ENCODE measurements at regions of chr16 and their contacts with region 1.

Region 1: GRCh38 chr16:3045357-3045728 is 1.0 kb upstream of the MMP25 start:
- DNase-seq: peak; percentile 41
- H3K4me3 Mint-ChIP-seq: peak overlapping the region; percentile 81
- H3K27ac Mint-ChIP-seq: peak overlapping the region; percentile 21
- H3K4me1 Mint-ChIP-seq: peaks cover 27% of the 10 kb centered on the region
- H3K27me3 Mint-ChIP-seq: peaks cover 26% of the 10 kb centered on the region

Region 2: GRCh38 chr16:2897113-2897512 is 148.2 kb before region 1 on chr16:
- intact Hi-C with region 1: no loop called
- DNase-seq: no peak
- H3K4me3 Mint-ChIP-seq: no peak overlapping the region
- H3K27ac Mint-ChIP-seq: no peak overlapping the region
- H3K4me1 Mint-ChIP-seq: no peaks in the 10 kb centered on the region
- H3K27me3 Mint-ChIP-seq: no peaks in the 10 kb centered on the region

Region 3: DNA sequence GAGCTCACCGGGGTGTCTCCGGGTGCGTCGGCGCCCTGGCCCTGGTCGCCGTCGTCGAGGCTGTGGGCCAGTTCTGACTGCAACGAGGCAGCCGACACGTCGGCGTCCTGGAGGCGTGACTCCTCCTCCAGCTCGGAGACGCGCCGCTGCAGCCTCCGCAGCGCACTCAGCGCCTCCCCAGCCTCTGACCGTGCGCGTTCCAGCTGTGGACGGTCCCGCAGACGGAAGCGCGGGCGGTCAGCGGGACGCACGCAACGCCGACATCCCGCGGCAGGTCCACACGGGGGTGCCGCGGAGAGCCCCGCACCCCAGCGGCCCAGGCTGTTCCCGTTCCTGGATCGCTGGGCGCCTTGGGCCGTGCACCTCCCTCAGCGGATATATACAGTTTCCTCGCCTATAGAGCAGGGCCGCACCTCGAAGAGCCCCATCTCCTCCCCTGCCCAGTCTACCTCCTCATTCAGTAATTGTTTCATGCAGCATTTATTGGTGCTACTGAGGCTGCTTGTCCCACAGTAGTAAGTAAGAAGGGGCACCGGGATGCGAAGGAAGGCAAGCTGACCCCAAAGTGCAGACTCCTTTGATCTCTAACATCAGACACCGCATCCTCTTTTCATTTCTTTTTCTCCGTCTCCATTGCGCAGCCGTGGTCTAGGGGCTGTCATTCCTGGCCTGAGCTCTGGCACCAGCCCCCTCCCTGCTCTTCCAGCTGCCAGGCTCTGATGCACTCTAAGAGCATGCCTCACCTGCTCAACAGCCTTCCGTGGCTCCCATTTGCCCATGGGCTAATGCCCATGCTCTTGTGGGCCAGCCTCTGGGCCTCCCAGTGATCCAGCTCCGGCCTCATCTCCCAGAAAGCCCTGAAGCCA is 15.6 kb before region 1 on chr16:
- intact Hi-C with region 1: loop called (anchors 2 kb)
- DNase-seq: peak; percentile 52
- H3K4me3 Mint-ChIP-seq: peak overlapping the region; percentile 66
- H3K27ac Mint-ChIP-seq: peak overlapping the region; percentile 49
- H3K4me1 Mint-ChIP-seq: peaks cover 23% of the 10 kb centered on the region
- H3K27me3 Mint-ChIP-seq: peaks cover 28% of the 10 kb centered on the region

Region 4: DNA sequence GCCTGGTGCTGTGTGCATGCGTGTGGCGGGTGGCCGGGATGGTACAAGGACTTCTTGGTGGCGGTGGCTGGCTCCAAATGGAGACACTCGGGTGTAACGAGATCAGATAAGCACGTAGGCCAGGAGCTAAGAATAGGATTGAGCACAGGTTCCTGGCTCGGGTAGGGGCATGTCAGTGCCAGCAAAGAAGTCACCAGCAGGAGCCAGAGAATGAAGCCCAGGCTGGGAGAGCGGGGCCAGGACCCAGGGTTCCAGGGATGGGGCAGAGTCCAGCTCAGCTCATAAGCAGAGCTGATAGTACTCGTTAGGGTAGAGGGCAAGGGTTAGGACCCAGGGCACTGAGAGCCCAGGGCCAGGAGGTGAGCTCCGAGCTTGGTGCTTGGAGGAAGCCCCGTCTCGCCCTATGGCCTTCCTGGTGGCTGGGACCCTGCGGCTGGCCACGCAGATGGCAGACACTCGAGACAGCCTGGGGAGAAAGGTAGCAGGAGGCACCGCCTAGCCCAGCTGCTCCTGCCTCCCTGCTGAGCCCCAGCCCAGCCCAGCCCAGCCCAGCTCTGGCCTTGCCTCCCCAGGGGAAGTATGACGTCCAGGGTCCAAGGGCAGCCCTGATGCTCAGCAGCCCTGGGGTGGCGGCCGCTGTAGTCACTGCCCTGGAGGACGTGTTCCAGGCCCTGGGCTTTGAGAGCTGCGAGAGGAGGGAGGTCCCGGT is 98.4 kb after region 1 on chr16:
- intact Hi-C with region 1: no loop called
- DNase-seq: no peak
- H3K4me3 Mint-ChIP-seq: no peak overlapping the region
- H3K27ac Mint-ChIP-seq: no peak overlapping the region
- H3K4me1 Mint-ChIP-seq: no peaks in the 10 kb centered on the region
- H3K27me3 Mint-ChIP-seq: peaks cover 3% of the 10 kb centered on the region

Measured in activated T-helper 2 cell treated with anti-CD3 and anti-CD28 coated beads, Interferon-gamma antibody, Interleukin-2, Interleukin-4, amounts not matched to agents 10 μg/mL and 5 μg/mL and 100 μg/mL, durations not matched to agents 14 hours and 24 hours and 36 hours (primary cell).